Uterus (tissue), 4 donors: ENCODE measurements at regions of chr1 and their contacts with region 1.

Region 1: DNA sequence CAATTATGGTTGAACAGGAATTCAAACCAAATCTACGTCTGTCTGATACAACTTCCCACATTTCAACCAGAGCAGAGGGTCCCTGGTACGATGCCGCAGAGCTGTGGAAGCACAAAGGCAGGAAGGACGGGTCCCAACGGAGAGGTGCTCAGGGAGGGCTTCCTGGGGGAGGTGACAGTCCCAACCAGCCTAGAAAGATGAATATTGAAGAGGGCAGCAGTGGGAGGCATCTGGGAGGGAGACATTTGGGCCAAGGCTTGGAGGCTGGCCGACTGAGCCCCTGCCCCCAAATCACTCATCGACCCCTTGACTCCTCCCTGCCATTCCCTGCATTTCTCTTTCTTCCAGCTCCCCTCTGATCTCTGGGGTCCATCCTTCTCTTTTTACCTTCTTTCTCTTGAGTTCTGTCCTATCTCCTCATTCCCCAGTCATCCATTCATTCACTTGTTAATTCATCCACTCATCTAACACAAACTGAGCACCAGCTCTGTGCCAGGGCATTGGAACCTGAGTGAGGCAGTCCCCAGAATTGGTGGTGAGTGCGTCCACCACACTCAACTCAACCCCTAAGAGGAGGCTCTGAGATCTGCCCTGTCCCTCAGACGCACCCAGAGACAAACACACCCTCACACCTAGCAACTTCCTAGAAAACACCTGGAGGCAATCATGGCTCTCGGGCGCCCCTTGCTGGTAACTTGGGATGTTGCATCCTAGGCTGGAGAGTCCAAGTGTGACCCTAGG is 13.2 kb upstream of the CELA3B start:
- DNase-seq: peak; percentile 80 to 83
- H3K4me3 ChIP-seq: no peak overlapping the region
- H3K27ac ChIP-seq: no peak overlapping the region
- H3K4me1 ChIP-seq: peaks cover 0 to 4% of the 10 kb centered on the region in 2 donors
- H3K27me3 ChIP-seq: no peaks in the 10 kb centered on the region
- CTCF ChIP-seq: peak; percentile 87 to 93 (median 91)
- POLR2A ChIP-seq: no peak

Region 2: DNA sequence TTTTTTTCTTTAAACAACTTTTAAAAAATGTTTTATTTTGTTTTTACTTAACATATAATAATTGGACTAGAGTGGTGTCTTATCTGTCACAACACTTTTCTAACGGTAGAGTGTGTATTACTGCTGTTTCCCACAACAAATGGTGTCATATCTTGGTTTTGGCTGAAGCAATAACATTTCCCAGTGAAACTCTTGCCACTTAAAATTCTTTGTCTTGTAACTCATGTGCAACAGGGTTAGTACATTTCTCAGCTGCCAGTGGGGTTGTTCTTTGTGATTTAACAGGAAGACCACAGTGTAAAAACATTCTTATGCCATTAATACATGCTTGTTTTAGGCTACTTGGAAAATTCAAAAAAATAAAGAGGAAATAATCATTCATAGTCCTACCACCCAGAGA is 410.9 kb before region 1 on chr1:
- intact Hi-C with region 1: no loop called
- DNase-seq: no peak
- H3K4me3 ChIP-seq: no peak overlapping the region
- H3K27ac ChIP-seq: no peak overlapping the region
- H3K4me1 ChIP-seq: no peaks in the 10 kb centered on the region
- H3K27me3 ChIP-seq: no peaks in the 10 kb centered on the region
- CTCF ChIP-seq: no peak
- POLR2A ChIP-seq: no peak

Region 3: DNA sequence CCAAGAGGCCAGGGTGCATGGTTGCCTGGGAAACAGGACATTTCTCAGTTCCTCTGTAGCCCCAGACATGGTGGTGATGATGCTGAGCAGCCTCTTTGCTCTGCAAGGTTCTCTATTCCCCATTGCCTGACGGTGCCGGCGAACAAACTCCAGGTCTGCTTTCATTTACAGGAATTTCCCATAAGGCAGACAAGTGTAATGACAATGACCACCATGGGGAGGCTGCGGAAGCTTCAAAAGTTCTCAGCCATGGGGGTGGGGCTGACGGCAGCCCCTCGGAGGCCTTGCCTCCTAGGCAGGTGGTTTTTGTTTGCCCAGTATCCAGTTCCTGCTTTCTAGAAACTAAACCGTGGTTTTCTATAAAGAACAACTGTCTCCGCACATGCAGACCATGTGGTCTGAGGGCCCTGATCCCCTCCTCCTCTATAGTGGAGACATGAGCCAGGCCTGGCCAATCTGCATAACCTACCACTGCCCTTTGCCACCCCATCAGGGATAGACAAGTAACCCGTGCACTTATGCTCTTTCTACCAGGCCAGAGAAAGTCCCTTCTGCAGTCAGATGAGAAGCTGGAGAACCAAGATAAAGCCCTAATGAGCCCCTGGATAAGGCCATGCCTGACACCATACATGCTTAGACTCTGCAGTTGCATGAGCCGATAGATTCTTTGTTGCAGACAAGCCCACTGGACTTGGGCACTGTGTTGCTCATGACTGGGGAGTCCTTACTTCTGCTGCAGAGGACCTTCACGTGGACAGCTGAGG is 97.5 kb before region 1 on chr1:
- intact Hi-C with region 1: loop called (anchors 10 kb)
- DNase-seq: no peak
- H3K4me3 ChIP-seq: no peak overlapping the region
- H3K27ac ChIP-seq: no peak overlapping the region
- H3K4me1 ChIP-seq: peaks cover 0 to 7% of the 10 kb centered on the region in 2 donors
- H3K27me3 ChIP-seq: no peaks in the 10 kb centered on the region
- CTCF ChIP-seq: no peak
- POLR2A ChIP-seq: no peak